Breast epithelium (tissue), 4 donors: ENCODE measurements at regions of chr14 and their contacts with region 1.

Region 1: GRCh38 chr14:24241829-24242443 is 487 bp downstream of the TINF2 start:
- DNase-seq: peak in 1 of 2 donors; percentile 91
- H3K4me3 ChIP-seq: peak overlapping the region; percentile 63 to 75 (median 75)
- H3K27ac ChIP-seq: peak overlapping the region; percentile 97
- H3K4me1 ChIP-seq: peaks cover 3 to 17% of the 10 kb centered on the region in 2 donors
- H3K27me3 ChIP-seq: no peaks in the 10 kb centered on the region
- CTCF ChIP-seq: peak; percentile 73 to 79 (median 76)
- POLR2A ChIP-seq: no peak

Region 2: GRCh38 chr14:24299255-24300195 is 57.6 kb after region 1 on chr14 and contains the starts of genes DHRS1 and NOP9:
- intact Hi-C with region 1: loop called (anchors 10 kb)
- DNase-seq: peak; percentile 87 to 93
- H3K4me3 ChIP-seq: peak within 1 kb of the TSS; percentile 63 to 99 (median 94)
- H3K27ac ChIP-seq: peak within 1 kb of the TSS; percentile 92 to 95
- H3K4me1 ChIP-seq: peaks cover 4 to 11% of the 10 kb centered on the region in 2 donors
- H3K27me3 ChIP-seq: no peaks in the 10 kb centered on the region
- CTCF ChIP-seq: no peak
- POLR2A ChIP-seq: peak; percentile 72
- total RNA-seq, gene DHRS1: 21.9 to 45.7 (median 32.1) TPM
- total RNA-seq, gene NOP9: 18.4 to 21.0 (median 19.0) TPM